ENCODE measurements at regions of chr13 and their contacts with region 1.

Region 1: GRCh38 chr13:36736119-36736726 is 62.4 kb downstream of the SERTM1 start:
- DNase-seq: peak; percentile 63 to 81 (median 72)
- H3K4me3 ChIP-seq: no peak overlapping the region
- H3K27ac ChIP-seq: no peak overlapping the region
- H3K4me1 ChIP-seq: no peaks in the 10 kb centered on the region
- H3K27me3 ChIP-seq: no peaks in the 10 kb centered on the region

Region 2: GRCh38 chr13:36282818-36283445 is 453.3 kb before region 1 on chr13:
- CTCF ChIA-PET with region 1: interaction called, 14 read pairs
- POLR2A ChIA-PET with region 1: no interaction called
- DNase-seq: peak; percentile 21 to 43 (median 38)
- H3K4me3 ChIP-seq: no peak overlapping the region
- H3K27ac ChIP-seq: no peak overlapping the region
- H3K4me1 ChIP-seq: peaks cover 0 to 2% (median 0%) of the 10 kb centered on the region in 4 experiments
- H3K27me3 ChIP-seq: no peaks in the 10 kb centered on the region

Region 3: DNA sequence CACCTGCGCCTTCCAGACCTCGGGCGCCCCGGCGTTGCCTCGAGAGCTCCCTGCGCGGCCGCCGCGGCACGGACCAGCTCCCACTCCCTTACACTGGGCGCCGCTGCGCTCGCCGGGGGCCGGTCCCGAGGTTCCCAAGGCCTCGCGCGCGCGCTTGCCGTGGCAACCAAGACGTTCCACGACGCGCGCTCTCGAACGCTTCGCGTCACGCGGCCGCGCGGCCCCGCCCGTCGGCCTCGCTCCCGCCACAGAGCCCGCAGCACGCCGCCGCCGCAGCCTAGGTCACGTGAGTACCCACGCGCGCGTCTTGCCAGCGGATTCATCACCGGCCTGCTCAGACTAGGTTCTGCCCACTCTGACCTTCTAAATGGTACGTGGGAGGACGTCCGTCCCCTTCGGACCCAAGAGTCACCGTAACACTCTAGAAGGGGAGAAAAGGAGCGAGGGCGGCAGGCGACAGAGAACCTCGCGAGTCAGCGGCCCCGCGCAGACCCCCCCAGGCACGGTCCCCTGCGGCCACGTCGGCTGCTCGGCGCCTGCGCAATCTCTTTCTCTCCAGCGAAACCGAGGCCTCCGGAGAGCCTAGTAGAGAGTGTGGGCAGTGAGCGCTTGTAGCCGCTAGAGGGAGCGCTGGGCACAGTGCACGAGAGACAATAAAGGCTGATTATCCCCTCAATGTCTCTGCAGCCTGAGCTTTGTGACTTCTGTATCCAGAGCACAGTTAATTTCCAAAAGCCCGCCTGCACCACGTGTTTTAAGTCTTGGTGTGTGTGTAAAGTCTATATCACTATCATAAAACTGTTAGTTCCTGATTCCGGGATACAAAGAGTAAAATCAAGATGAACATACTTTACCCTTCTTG is 389.8 kb before region 1 on chr13 and contains the start of gene SPART:
- CTCF ChIA-PET with region 1: interaction called, 10 read pairs
- POLR2A ChIA-PET with region 1: no interaction called
- DNase-seq: peak; percentile 91 to 94 (median 92)
- H3K4me3 ChIP-seq: peak within 1 kb of the TSS; percentile 48 to 93 (median 86)
- H3K27ac ChIP-seq: peak within 1 kb of the TSS; percentile 98 to 99
- H3K4me1 ChIP-seq: peaks cover 8 to 34% (median 19%) of the 10 kb centered on the region in 4 experiments
- H3K27me3 ChIP-seq: no peaks in the 10 kb centered on the region

Region 4: DNA sequence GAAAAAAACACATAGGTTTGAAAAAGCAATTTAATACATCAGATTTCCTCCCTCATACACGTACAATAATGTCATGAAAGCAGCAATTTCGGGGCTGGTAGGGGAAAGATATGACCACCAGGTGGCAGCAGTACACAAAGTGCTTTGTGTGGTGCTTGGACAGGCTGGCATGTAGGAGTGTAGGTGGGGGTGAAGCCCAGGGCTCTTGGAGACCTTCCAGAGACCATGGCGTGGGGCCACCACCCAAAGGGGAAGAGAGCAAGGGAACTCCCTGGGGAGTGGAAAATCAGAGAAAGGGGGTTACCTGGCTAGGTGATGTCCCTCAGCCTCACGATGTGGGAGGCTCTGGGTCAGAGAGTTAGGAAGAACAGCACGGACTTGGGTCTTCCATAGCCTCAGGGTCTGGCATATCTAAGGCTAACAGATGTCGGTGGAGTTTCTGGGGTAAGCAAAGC is 315.8 kb before region 1 on chr13:
- CTCF ChIA-PET with region 1: interaction called, 31 read pairs
- POLR2A ChIA-PET with region 1: no interaction called
- DNase-seq: peak; percentile 86 to 94 (median 92)
- H3K4me3 ChIP-seq: peak overlapping the region in 1 of 7 experiments; percentile 43
- H3K27ac ChIP-seq: no peak overlapping the region
- H3K4me1 ChIP-seq: peaks cover 21 to 47% (median 31%) of the 10 kb centered on the region in 4 experiments
- H3K27me3 ChIP-seq: no peaks in the 10 kb centered on the region

Region 5: GRCh38 chr13:36453516-36453915 is 282.7 kb before region 1 on chr13:
- CTCF ChIA-PET with region 1: interaction called, 51 read pairs
- POLR2A ChIA-PET with region 1: no interaction called
- DNase-seq: peak in 2 of 3 donors; percentile 35 to 36
- H3K4me3 ChIP-seq: no peak overlapping the region
- H3K27ac ChIP-seq: no peak overlapping the region
- H3K4me1 ChIP-seq: peaks cover 4 to 57% (median 29%) of the 10 kb centered on the region in 4 experiments
- H3K27me3 ChIP-seq: no peaks in the 10 kb centered on the region

Region 6: DNA sequence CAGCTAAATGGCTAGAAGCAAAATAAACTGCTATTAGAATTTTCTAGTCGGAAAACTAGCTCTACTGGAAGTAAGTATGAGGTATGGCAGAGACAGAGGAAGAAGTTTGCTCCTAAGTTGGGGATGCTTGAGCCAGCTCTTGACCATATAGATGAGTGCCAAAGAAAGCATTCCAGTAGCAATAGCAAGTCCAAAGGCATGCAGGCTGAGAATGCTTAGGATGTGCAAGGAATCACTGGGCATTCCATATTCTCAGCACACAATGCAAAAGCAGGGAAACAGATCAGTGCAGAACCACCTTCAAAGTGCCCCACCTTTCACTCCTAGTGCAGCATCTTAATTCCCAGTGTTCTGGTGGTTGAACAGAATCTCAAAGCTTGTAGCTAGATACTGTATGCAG is 29.5 kb before region 1 on chr13:
- CTCF ChIA-PET with region 1: no interaction called
- POLR2A ChIA-PET with region 1: no interaction called
- DNase-seq: no peak
- H3K4me3 ChIP-seq: no peak overlapping the region
- H3K27ac ChIP-seq: no peak overlapping the region
- H3K4me1 ChIP-seq: no peaks in the 10 kb centered on the region
- H3K27me3 ChIP-seq: no peaks in the 10 kb centered on the region

Region 7: GRCh38 chr13:36897054-36897616 is 160.9 kb after region 1 on chr13:
- CTCF ChIA-PET with region 1: no interaction called
- POLR2A ChIA-PET with region 1: no interaction called
- DNase-seq: no peak
- H3K4me3 ChIP-seq: no peak overlapping the region
- H3K27ac ChIP-seq: no peak overlapping the region
- H3K4me1 ChIP-seq: no peaks in the 10 kb centered on the region
- H3K27me3 ChIP-seq: no peaks in the 10 kb centered on the region